Activated CD8-positive, alpha-beta T cell treated with anti-CD3 and anti-CD28 coated beads for 36 hours (primary cell): ENCODE measurements at regions of chr17 and their contacts with region 1.

Region 1: DNA sequence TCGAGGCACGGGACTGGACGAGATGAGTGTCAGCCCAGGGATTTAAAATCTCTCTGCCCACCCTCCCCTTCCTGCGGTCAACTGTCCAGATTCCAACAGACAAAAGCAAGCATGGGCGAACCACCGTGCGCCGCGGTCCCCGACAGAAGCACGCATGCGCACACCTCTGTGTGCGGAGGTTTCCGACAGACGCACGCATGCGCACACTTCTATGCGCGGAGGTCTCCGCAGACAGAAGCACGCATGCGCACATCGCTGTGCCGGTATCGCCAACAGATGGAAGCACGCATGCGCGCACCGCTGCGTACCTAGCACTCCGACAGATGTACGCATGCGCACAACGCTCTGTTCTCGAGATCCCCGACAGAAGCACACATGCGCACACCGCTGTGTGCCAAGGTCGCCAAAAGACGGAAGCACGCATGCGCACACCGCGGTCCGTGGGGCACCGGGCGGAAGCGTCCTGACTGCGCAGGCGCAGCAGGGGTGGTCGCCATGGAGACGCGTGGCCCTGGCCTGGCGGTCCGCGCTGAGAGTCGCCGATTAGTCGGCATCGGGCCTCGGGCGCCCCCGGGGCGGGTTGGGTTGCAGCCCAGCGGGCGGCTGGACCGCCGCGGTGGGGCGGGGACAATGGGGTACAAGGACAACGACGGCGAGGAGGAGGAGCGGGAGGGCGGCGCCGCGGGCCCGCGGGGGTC is 57.4 kb upstream of the RPH3AL start:
- DNase-seq: peak; percentile 100
- ATAC-seq: peak; percentile 73
- H3K4me3 Mint-ChIP-seq: peak overlapping the region; percentile 75
- H3K27ac Mint-ChIP-seq: peak overlapping the region; percentile 73
- H3K4me1 Mint-ChIP-seq: peaks cover 50% of the 10 kb centered on the region
- H3K27me3 Mint-ChIP-seq: no peaks in the 10 kb centered on the region
- CTCF ChIP-seq: no peak

Region 2: DNA sequence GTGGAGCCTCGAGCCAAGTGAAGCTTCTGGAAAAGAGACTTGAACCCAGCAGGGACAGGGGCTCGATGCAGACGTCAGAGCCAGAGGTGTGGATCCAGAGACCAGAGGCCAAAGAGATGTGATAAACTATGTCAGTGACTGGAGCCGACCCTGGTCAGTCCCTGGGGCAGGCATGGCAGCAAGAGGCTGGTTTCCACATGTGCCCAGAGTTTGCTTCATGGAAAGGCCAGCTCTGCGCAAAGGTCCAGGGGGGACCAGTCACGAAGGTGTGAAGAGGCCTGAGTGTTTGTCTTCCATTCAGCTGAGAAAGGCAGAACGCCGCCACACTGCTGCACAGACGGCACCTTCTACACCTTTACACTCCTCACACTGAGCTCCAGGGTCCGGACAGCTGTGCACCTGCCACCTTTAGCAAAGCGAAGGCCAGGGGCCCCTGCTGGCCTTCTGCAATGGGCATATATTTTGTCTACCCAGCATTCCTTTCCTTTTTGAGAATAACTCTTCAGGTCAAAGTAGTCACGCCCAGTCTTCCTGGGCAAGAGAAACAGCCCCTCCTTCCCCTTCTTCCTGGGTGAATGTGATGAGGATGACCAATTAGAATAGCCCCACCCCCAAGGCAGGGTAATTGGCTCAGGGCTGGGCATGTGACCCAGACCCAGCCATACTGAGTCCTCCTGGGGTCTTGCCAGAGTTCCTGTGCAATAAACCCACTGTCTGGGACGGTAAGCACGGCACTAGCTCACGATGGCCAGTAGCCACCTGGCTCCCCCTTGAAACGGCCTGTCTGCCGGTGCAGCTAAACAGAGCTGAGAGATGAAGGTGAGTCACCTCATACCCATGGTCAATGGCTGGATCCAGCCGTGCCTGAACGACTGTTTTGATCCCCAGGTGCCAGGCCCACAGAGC is 55.1 kb before region 1 on chr17:
- CTCF ChIA-PET with region 1: no interaction called
- POLR2A ChIA-PET with region 1: no interaction called
- intact Hi-C with region 1: no loop called
- DNase-seq: no peak
- ATAC-seq: no peak
- H3K4me3 Mint-ChIP-seq: no peak overlapping the region
- H3K27ac Mint-ChIP-seq: no peak overlapping the region
- H3K4me1 Mint-ChIP-seq: peaks cover 2% of the 10 kb centered on the region
- H3K27me3 Mint-ChIP-seq: no peaks in the 10 kb centered on the region
- CTCF ChIP-seq: no peak

Region 3: GRCh38 chr17:376936-377863 is 32.8 kb before region 1 on chr17:
- CTCF ChIA-PET with region 1: no interaction called
- POLR2A ChIA-PET with region 1: no interaction called
- intact Hi-C with region 1: no loop called
- DNase-seq: no peak
- ATAC-seq: no peak
- H3K4me3 Mint-ChIP-seq: no peak overlapping the region
- H3K27ac Mint-ChIP-seq: no peak overlapping the region
- H3K4me1 Mint-ChIP-seq: peaks cover 4% of the 10 kb centered on the region
- H3K27me3 Mint-ChIP-seq: peaks cover 3% of the 10 kb centered on the region
- CTCF ChIP-seq: no peak

Region 4: DNA sequence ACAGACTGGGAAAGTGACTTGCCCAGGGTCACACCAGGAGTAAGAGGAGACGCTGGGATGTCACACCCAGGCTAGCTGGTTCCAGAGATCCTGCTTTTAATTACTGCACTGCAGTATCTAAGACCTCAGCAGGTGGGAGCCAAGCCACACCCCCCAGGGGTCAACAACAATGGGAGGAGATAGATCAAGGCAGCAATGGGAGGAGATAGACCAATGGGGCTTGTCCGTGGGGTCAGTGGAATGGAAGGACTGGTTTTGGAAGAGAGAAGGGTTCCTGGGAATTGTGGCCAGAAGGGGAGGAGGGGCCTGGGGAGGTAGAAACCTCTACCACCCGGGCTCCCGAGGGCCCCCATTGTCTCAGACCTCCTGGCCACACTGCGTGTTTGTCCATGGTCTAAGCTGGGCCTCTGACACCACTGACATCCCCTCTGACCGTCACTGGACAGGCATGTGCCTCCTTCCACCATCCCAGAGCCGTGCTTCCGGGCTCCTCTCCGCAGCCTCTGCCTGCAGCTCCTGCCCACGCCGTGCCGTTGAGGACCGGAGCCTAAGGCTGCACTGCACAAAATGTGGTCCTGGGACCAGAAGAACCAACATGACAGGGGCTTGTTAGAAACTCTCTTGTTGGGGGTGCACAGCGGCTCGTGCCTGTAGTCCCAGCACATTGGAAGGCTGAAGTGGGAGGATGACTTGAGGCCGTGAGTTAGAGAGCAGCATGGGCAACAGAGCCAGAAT is 12.4 kb after region 1 on chr17:
- CTCF ChIA-PET with region 1: interaction called, 18 read pairs
- POLR2A ChIA-PET with region 1: interaction called, 5 read pairs
- intact Hi-C with region 1: no loop called
- DNase-seq: no peak
- ATAC-seq: no peak
- H3K4me3 Mint-ChIP-seq: no peak overlapping the region
- H3K27ac Mint-ChIP-seq: no peak overlapping the region
- H3K4me1 Mint-ChIP-seq: peaks cover 34% of the 10 kb centered on the region
- H3K27me3 Mint-ChIP-seq: no peaks in the 10 kb centered on the region
- CTCF ChIP-seq: no peak

Region 5: DNA sequence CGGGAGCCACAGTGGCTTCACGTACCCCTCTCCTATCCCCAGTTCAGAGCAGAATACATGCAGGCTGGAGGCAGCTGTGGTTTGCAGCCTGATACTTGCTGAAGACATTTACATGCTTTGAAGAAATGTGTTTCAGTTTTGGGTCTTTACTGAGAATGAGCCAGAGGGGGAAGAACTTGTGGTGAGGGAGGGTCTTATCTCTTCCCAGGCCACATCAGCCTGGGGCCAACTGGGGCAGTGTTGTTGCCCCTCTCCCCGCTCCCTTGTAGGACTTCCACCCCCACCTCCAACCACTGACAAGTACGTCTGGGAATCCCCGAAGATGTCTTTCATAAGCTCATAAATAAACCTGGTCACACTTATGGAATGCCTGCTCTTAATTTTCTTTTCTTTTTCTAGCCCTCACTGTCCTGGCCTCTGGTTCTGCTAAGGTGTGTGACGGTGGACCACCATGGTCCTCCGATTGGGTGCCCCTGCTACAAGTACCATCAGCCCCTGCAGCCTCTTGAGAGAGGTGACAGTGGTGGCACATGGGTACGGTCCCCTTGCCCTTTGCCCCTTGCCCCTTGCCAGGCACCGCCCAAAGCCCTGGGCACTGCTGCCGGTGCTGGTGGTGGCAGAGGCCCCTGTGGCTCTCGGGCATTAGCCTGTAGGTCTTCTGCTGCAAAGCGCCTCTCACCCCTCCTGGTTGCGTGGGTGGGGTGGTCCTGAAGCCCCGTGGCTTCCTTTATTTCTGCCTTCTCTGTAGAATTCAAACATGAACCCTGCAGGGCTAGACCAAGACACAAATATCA is 87.4 kb after region 1 on chr17:
- CTCF ChIA-PET with region 1: interaction called, 42 read pairs
- POLR2A ChIA-PET with region 1: no interaction called
- intact Hi-C with region 1: no loop called
- DNase-seq: peak; percentile 44
- ATAC-seq: peak; percentile 72
- H3K4me3 Mint-ChIP-seq: peak overlapping the region; percentile 43
- H3K27ac Mint-ChIP-seq: peak overlapping the region; percentile 64
- H3K4me1 Mint-ChIP-seq: peaks cover 43% of the 10 kb centered on the region
- H3K27me3 Mint-ChIP-seq: peaks cover 6% of the 10 kb centered on the region
- CTCF ChIP-seq: no peak

Region 6: GRCh38 chr17:534071-534691 is 124.2 kb after region 1 on chr17:
- CTCF ChIA-PET with region 1: interaction called, 15 read pairs
- POLR2A ChIA-PET with region 1: interaction called, 3 read pairs
- intact Hi-C with region 1: no loop called
- DNase-seq: no peak
- ATAC-seq: no peak
- H3K4me3 Mint-ChIP-seq: no peak overlapping the region
- H3K27ac Mint-ChIP-seq: peak overlapping the region; percentile 23
- H3K4me1 Mint-ChIP-seq: peaks cover 4% of the 10 kb centered on the region
- H3K27me3 Mint-ChIP-seq: no peaks in the 10 kb centered on the region
- CTCF ChIP-seq: no peak

Region 7: DNA sequence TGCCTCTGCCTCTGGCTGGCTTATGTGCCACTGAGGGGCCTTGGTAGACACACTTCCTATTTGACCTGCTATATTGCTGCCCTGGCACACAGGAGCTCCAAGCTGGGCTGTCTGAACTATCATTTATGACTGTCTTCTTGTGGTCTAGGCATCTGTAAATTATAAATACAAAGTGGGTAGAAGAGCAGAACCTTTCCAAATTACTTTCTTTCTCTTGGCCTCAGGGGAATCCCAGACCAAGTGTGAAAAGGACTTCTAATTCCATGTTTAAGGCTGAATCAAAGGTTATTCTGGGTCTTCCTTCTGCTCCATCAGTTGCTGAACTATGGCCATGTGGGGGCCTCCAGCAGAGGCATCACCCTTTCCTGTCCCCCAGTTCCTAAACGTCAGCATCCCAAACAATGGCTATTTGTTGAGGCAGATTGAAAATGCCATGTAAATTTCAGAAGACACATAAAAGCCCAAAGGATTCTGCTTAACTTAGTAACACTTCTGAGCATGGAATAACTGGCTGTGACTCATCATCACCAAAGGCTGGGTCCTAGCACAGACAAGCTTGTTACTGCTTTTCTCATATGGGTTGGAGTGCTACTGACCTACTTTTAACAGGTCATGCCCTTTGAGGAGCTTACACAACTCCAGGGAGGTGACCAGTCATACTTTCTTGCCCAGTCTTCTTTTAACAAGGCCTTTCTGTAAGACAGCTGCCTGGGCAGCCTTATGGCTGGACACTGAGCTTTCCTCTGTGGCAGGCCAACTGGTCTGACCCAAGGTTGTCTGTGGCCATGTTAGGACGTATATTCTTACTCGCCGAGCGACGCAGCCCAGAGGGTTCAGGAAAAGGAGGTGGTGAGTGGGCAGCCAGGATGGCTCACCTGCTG is 149.8 kb after region 1 on chr17:
- CTCF ChIA-PET with region 1: interaction called, 10 read pairs
- POLR2A ChIA-PET with region 1: no interaction called
- intact Hi-C with region 1: no loop called
- DNase-seq: no peak
- ATAC-seq: peak; percentile 55
- H3K4me3 Mint-ChIP-seq: no peak overlapping the region
- H3K27ac Mint-ChIP-seq: no peak overlapping the region
- H3K4me1 Mint-ChIP-seq: peaks cover 12% of the 10 kb centered on the region
- H3K27me3 Mint-ChIP-seq: no peaks in the 10 kb centered on the region
- CTCF ChIP-seq: no peak

Region 8: DNA sequence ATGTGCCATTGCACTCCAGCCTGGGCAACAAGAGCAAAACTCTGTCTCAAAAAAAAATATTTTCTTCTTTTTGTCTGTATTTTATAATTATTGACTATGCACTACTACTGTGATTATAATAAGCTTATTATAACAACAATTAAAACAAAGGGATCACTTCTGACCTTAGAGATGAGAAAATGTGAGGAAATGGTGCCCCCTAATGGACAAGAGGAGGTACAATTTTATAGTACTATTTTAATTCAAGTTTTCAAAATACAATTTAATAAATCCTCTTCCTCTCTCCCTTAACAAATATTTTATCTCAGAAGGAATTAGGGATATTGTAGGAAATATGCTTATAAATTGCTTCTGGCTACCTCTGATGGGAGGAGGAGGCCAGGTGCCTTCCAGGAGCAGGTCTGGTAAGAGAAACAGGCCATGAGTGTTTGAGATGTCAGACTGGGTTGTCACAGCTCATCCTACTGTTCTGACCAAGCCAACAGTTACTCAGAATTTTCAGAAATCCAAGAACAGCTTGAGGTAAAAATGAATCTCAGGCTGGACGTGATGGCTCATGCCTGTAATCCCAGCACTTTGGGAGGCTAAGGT is 290.6 kb after region 1 on chr17:
- CTCF ChIA-PET with region 1: interaction called, 162 read pairs
- POLR2A ChIA-PET with region 1: interaction called, 3 read pairs
- intact Hi-C with region 1: loop called (anchors 5 kb)
- DNase-seq: no peak
- ATAC-seq: peak; percentile 62
- H3K4me3 Mint-ChIP-seq: no peak overlapping the region
- H3K27ac Mint-ChIP-seq: no peak overlapping the region
- H3K4me1 Mint-ChIP-seq: peaks cover 4% of the 10 kb centered on the region
- H3K27me3 Mint-ChIP-seq: no peaks in the 10 kb centered on the region
- CTCF ChIP-seq: peak; percentile 66